B cell (primary cell): ENCODE measurements at regions of chr19 and their contacts with region 1.

Region 1: DNA sequence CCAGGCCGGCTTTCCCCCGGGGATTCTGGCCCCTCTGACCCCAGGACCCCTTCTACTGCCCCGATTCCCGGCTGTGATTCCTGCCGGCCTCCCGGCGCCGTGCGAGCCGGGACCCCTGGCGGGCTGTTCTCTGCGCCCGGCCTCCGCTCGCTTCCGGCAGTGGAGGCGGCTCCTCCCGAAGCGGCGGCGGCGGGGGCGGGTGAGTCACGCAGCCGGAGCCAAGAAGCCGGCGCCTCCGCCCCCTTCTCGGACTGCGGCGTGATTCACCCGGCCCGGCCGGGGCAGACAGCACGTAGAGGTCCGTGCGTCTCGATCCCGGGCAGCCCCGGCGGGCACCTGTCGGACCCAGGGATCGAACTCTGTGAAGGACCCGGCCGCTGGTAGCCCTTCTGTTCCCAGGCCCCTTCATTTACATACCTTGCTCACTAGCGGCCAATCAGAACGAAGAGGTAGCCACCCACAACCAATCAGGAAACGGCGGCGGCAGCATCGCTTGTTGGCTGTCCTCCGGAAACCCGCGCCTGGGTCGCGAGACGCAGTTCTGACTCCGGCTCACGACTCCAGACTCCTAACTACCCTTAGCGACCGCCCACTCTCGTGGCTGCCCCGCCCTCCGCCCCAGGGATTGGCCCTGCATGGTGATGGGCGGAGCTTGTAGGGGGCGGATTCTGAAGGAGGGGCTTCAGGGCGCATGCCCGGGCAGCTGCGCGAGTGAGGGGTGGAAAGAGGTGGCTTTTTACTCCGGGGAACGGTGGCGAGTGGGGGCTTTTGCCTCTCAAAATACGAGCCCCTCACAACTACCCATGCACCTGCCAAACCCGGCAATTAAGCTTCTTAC is at the start of gene SERTAD1:
- DNase-seq: peak; percentile 100
- ATAC-seq: peak; percentile 89
- H3K4me3 ChIP-seq: peak within 1 kb of the TSS; percentile 71 to 89 (median 82)
- H3K4me3 Mint-ChIP-seq: peak within 1 kb of the TSS; percentile 98
- H3K27ac ChIP-seq: peak within 1 kb of the TSS; percentile 84 to 93
- H3K27ac Mint-ChIP-seq: peak within 1 kb of the TSS; percentile 98
- H3K4me1 ChIP-seq: peaks cover 14 to 24% of the 10 kb centered on the region in 2 donors
- H3K4me1 Mint-ChIP-seq: peaks cover 27% of the 10 kb centered on the region
- H3K27me3 ChIP-seq: no peaks in the 10 kb centered on the region
- H3K27me3 Mint-ChIP-seq: no peaks in the 10 kb centered on the region
- CTCF ChIP-seq: peak; percentile 75
- total RNA-seq, gene SERTAD1: 11.9 and 13.6 TPM in 2 replicates

Region 2: GRCh38 chr19:40305403-40305802 is 120.3 kb before region 1 on chr19:
- CTCF ChIA-PET with region 1: interaction called, 21 read pairs
- POLR2A ChIA-PET with region 1: no interaction called
- intact Hi-C with region 1: loop called (anchors 1 kb)
- DNase-seq: peak; percentile 84
- ATAC-seq: peak; percentile 68
- H3K4me3 ChIP-seq: no peak overlapping the region
- H3K4me3 Mint-ChIP-seq: no peak overlapping the region
- H3K27ac ChIP-seq: no peak overlapping the region
- H3K27ac Mint-ChIP-seq: no peak overlapping the region
- H3K4me1 ChIP-seq: peaks cover 0 to 3% of the 10 kb centered on the region in 2 donors
- H3K4me1 Mint-ChIP-seq: peaks cover 2% of the 10 kb centered on the region
- H3K27me3 ChIP-seq: no peaks in the 10 kb centered on the region
- H3K27me3 Mint-ChIP-seq: no peaks in the 10 kb centered on the region
- CTCF ChIP-seq: peak; percentile 88

Region 3: DNA sequence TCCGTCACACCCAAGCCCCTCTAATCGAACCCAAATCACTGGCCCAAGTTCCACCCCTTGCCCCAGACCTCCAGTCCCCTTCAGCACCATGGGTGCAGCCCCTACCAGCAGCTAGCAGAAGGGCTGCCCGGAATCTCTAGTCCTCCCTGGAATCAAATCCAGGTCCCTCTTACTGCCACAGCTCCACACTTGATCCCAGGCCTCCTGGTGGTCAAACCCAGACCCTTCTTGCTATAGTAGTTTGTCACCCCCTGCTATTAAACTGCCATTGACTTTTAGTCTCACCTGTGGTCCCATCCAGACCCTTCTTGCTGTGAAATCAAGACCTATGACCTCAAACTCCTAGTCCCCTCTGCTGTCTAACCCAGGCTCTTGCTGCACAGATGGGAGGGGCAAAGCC is 44.3 kb before region 1 on chr19:
- CTCF ChIA-PET with region 1: no interaction called
- POLR2A ChIA-PET with region 1: no interaction called
- intact Hi-C with region 1: no loop called
- DNase-seq: no peak
- ATAC-seq: no peak
- H3K4me3 ChIP-seq: no peak overlapping the region
- H3K4me3 Mint-ChIP-seq: no peak overlapping the region
- H3K27ac ChIP-seq: no peak overlapping the region
- H3K27ac Mint-ChIP-seq: no peak overlapping the region
- H3K4me1 ChIP-seq: no peaks in the 10 kb centered on the region
- H3K4me1 Mint-ChIP-seq: no peaks in the 10 kb centered on the region
- H3K27me3 ChIP-seq: peaks cover 0 to 3% (median 0%) of the 10 kb centered on the region in 4 experiments
- H3K27me3 Mint-ChIP-seq: no peaks in the 10 kb centered on the region
- CTCF ChIP-seq: no peak

Region 4: DNA sequence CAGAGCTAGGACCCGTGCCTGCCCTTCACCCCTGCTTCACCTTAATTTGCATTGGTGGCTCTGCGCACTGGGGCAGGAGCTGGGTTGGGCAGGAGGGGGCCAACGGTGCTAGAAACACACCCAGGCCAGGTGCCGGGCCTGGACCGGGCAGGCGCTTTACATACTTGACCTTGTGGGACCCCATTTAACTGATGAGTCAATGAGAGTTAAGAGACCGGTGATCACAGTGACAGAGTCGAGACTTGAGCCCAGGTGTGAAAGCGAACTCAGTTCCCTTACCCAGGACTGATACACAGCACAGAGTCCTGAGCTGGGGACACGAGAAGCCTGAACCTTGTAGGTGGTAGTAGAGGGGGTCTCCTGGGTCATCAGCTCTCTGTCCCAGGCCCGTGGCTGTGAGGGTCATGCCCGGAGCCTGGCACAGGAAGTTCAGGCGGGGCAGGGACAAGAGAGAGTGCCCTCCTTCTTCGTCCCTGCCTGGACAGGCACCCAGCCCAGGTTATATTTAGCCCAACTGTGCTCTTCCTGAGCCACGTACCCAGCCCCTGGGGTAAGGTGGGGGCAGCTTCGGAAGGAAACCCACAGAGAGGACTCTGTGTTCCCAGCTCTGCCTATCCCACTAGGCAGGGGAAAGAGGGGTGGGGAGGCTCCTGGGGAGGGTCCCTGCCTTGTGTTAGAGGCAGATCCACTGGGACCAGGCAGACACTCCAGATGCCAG is 14.4 kb before region 1 on chr19:
- CTCF ChIA-PET with region 1: interaction called, 14 read pairs
- POLR2A ChIA-PET with region 1: interaction called, 3 read pairs
- intact Hi-C with region 1: no loop called
- DNase-seq: no peak
- ATAC-seq: peak; percentile 33
- H3K4me3 ChIP-seq: no peak overlapping the region
- H3K4me3 Mint-ChIP-seq: peak overlapping the region; percentile 50
- H3K27ac ChIP-seq: peak overlapping the region; percentile 3 to 48
- H3K27ac Mint-ChIP-seq: peak overlapping the region; percentile 20
- H3K4me1 ChIP-seq: peaks cover 10 to 36% of the 10 kb centered on the region in 2 donors
- H3K4me1 Mint-ChIP-seq: peaks cover 30% of the 10 kb centered on the region
- H3K27me3 ChIP-seq: peaks cover 0 to 2% (median 0%) of the 10 kb centered on the region in 4 experiments
- H3K27me3 Mint-ChIP-seq: no peaks in the 10 kb centered on the region
- CTCF ChIP-seq: no peak

Region 5: DNA sequence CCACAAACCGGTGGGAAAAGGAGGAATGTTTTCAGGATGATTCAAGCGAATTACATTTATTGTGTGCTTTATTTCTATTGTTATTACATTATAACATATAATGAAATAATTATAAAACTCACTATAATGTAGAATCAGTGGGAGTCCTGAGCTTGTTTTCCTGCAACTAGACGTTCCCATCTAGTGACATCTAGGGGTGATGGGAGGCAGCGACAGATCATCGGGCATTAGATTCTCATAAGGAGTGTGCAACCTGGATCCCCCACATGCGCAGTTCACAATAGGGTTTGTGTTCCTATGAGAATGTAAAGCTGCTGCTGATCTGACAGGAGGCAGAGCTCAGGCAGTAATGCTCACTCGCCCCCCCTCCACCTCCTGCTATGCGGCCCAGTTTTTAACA is 95.6 kb after region 1 on chr19:
- CTCF ChIA-PET with region 1: interaction called, 12 read pairs
- POLR2A ChIA-PET with region 1: no interaction called
- intact Hi-C with region 1: loop called (anchors 2 kb)
- DNase-seq: peak; percentile 34
- ATAC-seq: no peak
- H3K4me3 ChIP-seq: no peak overlapping the region
- H3K4me3 Mint-ChIP-seq: no peak overlapping the region
- H3K27ac ChIP-seq: no peak overlapping the region
- H3K27ac Mint-ChIP-seq: no peak overlapping the region
- H3K4me1 ChIP-seq: no peaks in the 10 kb centered on the region
- H3K4me1 Mint-ChIP-seq: no peaks in the 10 kb centered on the region
- H3K27me3 ChIP-seq: peaks cover 0 to 15% (median 2%) of the 10 kb centered on the region in 4 experiments
- H3K27me3 Mint-ChIP-seq: peaks cover 31% of the 10 kb centered on the region
- CTCF ChIP-seq: peak; percentile 15

Region 6: DNA sequence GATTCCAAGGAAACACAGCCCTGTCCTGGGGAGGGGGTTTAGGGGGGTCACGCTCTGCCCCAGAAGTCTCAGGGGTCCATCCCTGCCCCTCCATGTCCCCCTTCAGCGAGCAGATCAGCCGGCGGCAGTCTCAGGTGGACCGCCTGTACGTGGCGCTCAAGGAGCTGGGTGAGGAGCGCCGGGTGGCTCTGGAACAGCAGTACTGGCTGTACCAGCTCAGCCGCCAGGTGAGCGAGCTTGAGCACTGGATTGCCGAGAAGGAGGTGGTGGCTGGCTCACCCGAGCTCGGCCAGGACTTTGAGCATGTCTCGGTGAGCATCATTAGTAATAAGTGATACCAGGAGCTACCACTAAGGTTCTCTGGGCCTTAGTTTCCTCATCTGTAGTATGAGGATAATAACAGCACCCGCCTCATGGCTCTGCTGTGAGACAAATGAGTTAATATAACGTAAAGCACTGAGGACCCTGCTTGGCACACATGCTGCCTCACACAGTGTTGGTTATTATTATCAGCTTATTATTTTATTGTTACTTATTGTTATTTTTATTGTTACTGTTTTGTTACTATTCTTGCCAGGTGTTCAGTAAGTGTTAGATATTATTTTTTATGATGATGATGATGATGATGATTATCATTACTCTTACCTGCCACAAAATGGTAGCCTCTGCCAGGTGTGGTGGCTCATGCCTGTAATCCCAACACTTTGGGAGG is 130.5 kb after region 1 on chr19:
- CTCF ChIA-PET with region 1: no interaction called
- POLR2A ChIA-PET with region 1: no interaction called
- intact Hi-C with region 1: no loop called
- DNase-seq: no peak
- ATAC-seq: no peak
- H3K4me3 ChIP-seq: no peak overlapping the region
- H3K4me3 Mint-ChIP-seq: no peak overlapping the region
- H3K27ac ChIP-seq: no peak overlapping the region
- H3K27ac Mint-ChIP-seq: no peak overlapping the region
- H3K4me1 ChIP-seq: no peaks in the 10 kb centered on the region
- H3K4me1 Mint-ChIP-seq: no peaks in the 10 kb centered on the region
- H3K27me3 ChIP-seq: peaks cover 0 to 45% (median 12%) of the 10 kb centered on the region in 4 experiments
- H3K27me3 Mint-ChIP-seq: peaks cover 45% of the 10 kb centered on the region
- CTCF ChIP-seq: no peak

Region 7: GRCh38 chr19:40570313-40571004 is 144.8 kb after region 1 on chr19:
- CTCF ChIA-PET with region 1: interaction called, 3 read pairs
- POLR2A ChIA-PET with region 1: interaction called, 3 read pairs
- intact Hi-C with region 1: loop called (anchors 1 kb)
- DNase-seq: peak; percentile 100
- ATAC-seq: peak; percentile 93
- H3K4me3 ChIP-seq: peak overlapping the region in 3 of 5 experiments; percentile 36 to 47 (median 37)
- H3K4me3 Mint-ChIP-seq: peak overlapping the region; percentile 70
- H3K27ac ChIP-seq: peak overlapping the region in 1 of 2 donors; percentile 33
- H3K27ac Mint-ChIP-seq: peak overlapping the region; percentile 83
- H3K4me1 ChIP-seq: peaks cover 24 to 27% of the 10 kb centered on the region in 2 donors
- H3K4me1 Mint-ChIP-seq: peaks cover 20% of the 10 kb centered on the region
- H3K27me3 ChIP-seq: peaks cover 0 to 32% (median 21%) of the 10 kb centered on the region in 4 experiments
- H3K27me3 Mint-ChIP-seq: peaks cover 4% of the 10 kb centered on the region
- CTCF ChIP-seq: peak; percentile 54

Region 8: DNA sequence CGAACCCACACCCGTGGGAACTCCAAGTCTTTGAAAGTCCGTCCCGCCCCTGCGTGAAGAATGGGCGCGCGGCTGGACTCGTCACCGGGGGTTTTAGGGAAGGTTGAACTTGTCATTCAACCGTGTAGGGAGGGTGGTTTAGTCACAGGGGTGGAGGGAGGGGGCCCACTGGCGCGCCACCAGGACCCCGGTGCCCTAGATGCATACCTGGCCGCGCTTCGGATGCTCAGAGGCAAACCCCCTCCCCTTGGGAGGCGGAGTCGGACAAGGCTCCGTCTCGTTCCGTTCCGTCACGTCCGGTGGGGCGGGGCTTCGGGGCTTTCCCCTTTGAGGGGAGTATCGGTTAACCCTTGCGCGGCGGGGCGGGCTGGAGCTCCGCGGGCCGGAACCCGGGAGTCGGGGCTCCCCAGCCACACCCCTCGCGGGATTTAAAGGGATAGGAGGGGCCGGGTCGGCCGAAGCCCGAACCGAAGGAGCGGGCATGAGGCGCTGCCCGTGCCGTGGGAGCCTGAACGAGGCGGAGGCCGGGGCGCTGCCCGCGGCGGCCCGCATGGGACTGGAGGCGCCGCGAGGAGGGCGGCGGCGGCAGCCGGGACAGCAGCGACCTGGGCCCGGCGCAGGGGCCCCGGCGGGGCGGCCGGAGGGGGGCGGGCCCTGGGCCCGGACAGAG is 291.1 kb after region 1 on chr19 and contains the starts of genes COQ8B and ITPKC:
- CTCF ChIA-PET with region 1: no interaction called
- POLR2A ChIA-PET with region 1: no interaction called
- intact Hi-C with region 1: no loop called
- DNase-seq: peak; percentile 98
- ATAC-seq: peak; percentile 75
- H3K4me3 ChIP-seq: peak within 1 kb of the TSS; percentile 79 to 90 (median 83)
- H3K4me3 Mint-ChIP-seq: peak within 1 kb of the TSS; percentile 88
- H3K27ac ChIP-seq: peak within 1 kb of the TSS; percentile 87 to 90
- H3K27ac Mint-ChIP-seq: peak within 1 kb of the TSS; percentile 97
- H3K4me1 ChIP-seq: peaks cover 47 to 64% of the 10 kb centered on the region in 2 donors
- H3K4me1 Mint-ChIP-seq: peaks cover 63% of the 10 kb centered on the region
- H3K27me3 ChIP-seq: no peaks in the 10 kb centered on the region
- H3K27me3 Mint-ChIP-seq: no peaks in the 10 kb centered on the region
- CTCF ChIP-seq: peak; percentile 22
- total RNA-seq, gene COQ8B: 55.4 and 58.9 TPM in 2 replicates
- total RNA-seq, gene ITPKC: 13.1 and 16.0 TPM in 2 replicates